OCI-LY7 (cell line): ENCODE measurements at regions of chr18 and their contacts with region 1.

Region 1: DNA sequence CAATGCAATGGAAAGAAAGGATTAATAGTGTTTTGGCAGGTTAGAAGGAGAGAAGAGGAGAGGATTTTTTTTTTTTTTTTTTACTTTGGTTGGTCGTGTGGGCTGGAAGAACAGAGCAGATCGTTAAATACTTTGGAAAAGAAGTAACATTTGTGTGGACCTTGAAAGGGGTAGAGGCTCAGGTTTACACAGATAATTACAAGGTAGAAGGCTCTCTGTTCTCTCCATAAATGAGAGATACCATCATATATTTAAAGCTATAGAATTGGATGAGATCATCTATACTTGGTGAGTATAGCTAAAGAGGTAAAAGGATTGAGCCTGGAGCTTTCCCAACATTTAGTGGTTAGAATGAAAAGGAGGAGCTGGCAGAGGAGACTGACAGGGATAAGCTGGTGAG is 49.0 kb downstream of the SMCHD1 start:
- DNase-seq: no peak
- H3K4me3 ChIP-seq: no peak overlapping the region
- H3K27ac ChIP-seq: no peak overlapping the region
- H3K4me1 ChIP-seq: no peaks in the 10 kb centered on the region
- CTCF ChIP-seq: no peak

Region 2: DNA sequence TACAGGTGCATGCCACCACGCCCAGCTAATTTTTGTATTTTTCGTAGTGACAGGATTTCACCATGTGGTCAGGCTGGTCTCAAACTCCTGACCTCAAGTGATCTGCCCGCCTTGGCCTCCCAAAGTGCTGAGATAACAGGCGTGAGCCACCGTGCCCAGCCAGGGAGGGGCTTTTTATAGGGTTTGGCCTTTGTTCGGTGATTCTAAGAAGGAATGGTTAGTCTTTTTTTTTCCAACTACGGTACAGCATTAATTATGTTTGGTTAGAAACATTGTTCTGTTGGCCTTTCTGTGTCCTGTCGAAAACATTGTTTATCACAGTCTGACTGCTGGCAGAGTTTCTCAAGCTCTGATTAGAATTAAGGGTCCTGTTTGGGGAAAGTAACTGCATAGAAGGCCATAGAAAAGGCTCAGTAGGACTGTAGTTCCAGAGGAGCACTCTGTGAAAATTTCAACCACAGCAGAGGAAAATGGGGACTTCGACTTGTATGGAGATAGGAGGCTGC is 68.4 kb before region 1 on chr18:
- CTCF ChIA-PET with region 1: no interaction called
- POLR2A ChIA-PET with region 1: no interaction called
- intact Hi-C with region 1: no loop called
- DNase-seq: no peak
- H3K4me3 ChIP-seq: peak overlapping the region; percentile 53
- H3K27ac ChIP-seq: peak overlapping the region; percentile 91
- H3K4me1 ChIP-seq: peaks cover 55% of the 10 kb centered on the region
- CTCF ChIP-seq: no peak

Region 3: GRCh38 chr18:2741651-2742050 is 37.1 kb after region 1 on chr18:
- CTCF ChIA-PET with region 1: no interaction called
- POLR2A ChIA-PET with region 1: interaction called, 5 read pairs
- intact Hi-C with region 1: loop called (anchors 5 kb)
- DNase-seq: no peak
- H3K4me3 ChIP-seq: no peak overlapping the region
- H3K27ac ChIP-seq: no peak overlapping the region
- H3K4me1 ChIP-seq: no peaks in the 10 kb centered on the region
- CTCF ChIP-seq: no peak

Region 4: DNA sequence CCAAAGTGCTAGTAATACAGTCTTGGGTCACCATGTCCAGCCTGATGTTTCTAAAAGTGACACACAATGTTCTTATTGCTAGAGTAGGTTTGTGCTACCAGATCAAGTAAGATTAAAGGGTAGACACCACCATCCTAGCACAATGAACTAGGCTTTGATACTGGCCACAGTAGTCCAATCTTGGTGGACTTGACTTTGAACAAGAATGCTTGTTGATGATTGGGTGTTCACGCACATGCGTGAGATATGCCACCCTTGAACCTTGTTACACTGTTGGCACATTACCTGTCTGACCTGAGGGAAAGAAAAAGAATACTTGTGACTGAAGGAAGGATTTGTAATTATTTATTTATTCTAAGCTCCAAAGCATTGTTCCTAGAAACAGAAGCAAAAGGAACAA is 70.1 kb after region 1 on chr18:
- CTCF ChIA-PET with region 1: no interaction called
- POLR2A ChIA-PET with region 1: no interaction called
- intact Hi-C with region 1: loop called (anchors 5 kb)
- DNase-seq: no peak
- H3K4me3 ChIP-seq: no peak overlapping the region
- H3K27ac ChIP-seq: no peak overlapping the region
- H3K4me1 ChIP-seq: no peaks in the 10 kb centered on the region
- CTCF ChIP-seq: no peak